Activated CD8-positive, alpha-beta T cell treated with anti-CD3 and anti-CD28 coated beads, Interleukin-2, amount 10 ng/mL, durations not matched to agents 7 days and 5 days (primary cell): ENCODE measurements at regions of chr1 and their contacts with region 1.

Region 1: DNA sequence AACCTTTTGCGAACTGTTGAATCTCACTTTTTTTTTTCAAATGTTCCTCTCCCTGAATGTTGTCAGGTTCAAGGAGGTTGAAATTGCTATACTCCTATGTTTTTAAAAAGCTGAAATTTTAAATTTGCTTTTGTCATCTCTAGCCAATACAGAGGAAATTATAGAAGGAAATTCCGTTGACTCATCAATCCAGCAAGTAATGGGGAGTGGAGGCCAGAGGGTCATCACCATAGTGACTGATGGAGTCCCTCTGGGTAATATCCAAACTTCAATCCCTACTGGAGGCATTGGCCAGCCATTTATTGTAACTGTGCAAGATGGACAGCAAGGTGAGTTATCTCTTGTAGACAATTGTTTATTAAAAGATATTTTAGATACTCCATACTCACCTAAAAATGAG is 36.3 kb downstream of the GABPB2 start:
- DNase-seq: no peak
- ATAC-seq: no peak
- H3K4me3 Mint-ChIP-seq: no peak overlapping the region
- H3K27ac Mint-ChIP-seq: no peak overlapping the region
- H3K4me1 Mint-ChIP-seq: no peaks in the 10 kb centered on the region
- H3K27me3 Mint-ChIP-seq: no peaks in the 10 kb centered on the region

Region 2: DNA sequence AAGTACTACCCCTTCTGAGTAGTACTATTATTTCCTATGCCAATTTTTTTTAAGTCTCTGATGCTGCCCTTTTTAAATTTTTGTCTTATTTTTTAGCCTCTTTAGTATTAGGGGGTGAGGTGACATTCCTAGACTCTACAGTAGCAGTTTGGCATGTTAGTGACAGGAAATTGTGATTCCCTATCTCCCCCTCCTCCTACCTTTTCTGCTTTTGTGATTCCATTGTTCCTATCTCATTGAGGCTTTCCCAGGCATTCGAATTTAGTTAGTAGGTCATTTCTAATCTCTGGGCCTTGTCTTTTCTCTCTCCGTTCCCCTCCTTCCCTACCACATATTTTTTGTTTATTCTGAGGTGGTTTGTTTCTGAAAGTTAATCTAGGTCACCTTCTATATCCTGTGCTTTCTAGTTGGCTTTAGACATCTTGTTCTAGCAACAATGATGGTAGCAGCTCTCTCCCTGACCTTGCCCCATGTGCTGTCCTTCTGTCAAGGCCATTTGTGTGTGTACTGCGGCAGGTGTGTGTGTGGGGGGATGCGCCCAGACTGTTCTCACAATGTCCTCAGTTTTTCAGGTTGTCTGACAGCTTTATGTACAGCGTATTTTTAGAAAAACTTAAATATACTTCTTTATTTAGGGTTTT is 18.0 kb after region 1 on chr1:
- CTCF ChIA-PET with region 1: no interaction called
- POLR2A ChIA-PET with region 1: no interaction called
- DNase-seq: no peak
- ATAC-seq: no peak
- H3K4me3 Mint-ChIP-seq: no peak overlapping the region
- H3K27ac Mint-ChIP-seq: no peak overlapping the region
- H3K4me1 Mint-ChIP-seq: no peaks in the 10 kb centered on the region
- H3K27me3 Mint-ChIP-seq: no peaks in the 10 kb centered on the region

Region 3: DNA sequence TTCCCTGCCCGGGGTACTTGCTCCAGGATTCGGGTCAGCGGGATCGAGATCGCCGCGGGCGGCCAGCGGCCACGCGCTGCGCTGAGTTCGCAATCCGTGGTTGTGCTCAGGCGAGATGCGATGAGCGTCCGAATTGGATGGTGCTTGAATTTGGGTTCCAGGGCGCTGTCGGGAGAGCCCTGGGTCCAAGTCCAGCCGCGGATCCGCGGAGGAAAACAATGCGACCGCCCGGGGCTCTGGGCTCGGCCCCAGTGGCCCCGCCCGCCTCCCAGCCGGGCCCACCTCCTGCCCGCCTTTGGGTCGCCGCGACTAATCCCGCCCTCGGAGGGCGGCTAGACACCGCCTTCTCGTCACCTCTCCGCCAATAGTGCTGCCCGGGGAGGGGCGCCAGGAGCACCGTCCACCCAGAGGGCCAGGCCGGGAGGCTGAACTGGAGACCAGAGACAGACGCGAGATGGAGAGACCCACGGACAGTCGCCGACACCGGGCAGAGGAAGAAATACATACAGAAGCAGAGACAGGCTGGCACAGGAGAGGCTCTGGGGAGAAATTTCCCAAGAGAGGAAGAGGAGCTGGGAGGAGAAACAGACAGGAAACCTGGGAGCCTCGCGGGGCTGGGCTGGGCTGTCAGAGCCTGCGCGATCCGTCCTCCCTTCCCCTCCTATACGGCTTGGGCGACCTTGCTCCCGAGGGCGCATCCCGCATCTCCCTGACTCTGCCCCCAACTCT is 39.7 kb after region 1 on chr1 and contains the start of gene SEMA6C:
- CTCF ChIA-PET with region 1: interaction called, 337 read pairs
- POLR2A ChIA-PET with region 1: no interaction called
- DNase-seq: peak; percentile 91
- ATAC-seq: peak; percentile 100
- H3K4me3 Mint-ChIP-seq: peak within 1 kb of the TSS; percentile 81
- H3K27ac Mint-ChIP-seq: peak within 1 kb of the TSS; percentile 28
- H3K4me1 Mint-ChIP-seq: peaks cover 15% of the 10 kb centered on the region
- H3K27me3 Mint-ChIP-seq: peaks cover 13% of the 10 kb centered on the region
- total RNA-seq, gene SEMA6C: 1.9 to 2.2 TPM